Endothelial cell of umbilical vein (primary cell): ENCODE measurements at regions of chr7 and their contacts with region 1.

Region 1: GRCh38 chr7:117375380-117375779 is 51.9 kb downstream of the ASZ1 start:
- DNase-seq: no peak
- H3K4me3 ChIP-seq: no peak overlapping the region
- H3K27ac ChIP-seq: no peak overlapping the region
- H3K4me1 ChIP-seq: no peaks in the 10 kb centered on the region
- H3K27me3 ChIP-seq: no peaks in the 10 kb centered on the region
- CTCF ChIP-seq: peak in 1 of 2 donors; percentile 9
- POLR2A ChIP-seq: no peak

Region 2: DNA sequence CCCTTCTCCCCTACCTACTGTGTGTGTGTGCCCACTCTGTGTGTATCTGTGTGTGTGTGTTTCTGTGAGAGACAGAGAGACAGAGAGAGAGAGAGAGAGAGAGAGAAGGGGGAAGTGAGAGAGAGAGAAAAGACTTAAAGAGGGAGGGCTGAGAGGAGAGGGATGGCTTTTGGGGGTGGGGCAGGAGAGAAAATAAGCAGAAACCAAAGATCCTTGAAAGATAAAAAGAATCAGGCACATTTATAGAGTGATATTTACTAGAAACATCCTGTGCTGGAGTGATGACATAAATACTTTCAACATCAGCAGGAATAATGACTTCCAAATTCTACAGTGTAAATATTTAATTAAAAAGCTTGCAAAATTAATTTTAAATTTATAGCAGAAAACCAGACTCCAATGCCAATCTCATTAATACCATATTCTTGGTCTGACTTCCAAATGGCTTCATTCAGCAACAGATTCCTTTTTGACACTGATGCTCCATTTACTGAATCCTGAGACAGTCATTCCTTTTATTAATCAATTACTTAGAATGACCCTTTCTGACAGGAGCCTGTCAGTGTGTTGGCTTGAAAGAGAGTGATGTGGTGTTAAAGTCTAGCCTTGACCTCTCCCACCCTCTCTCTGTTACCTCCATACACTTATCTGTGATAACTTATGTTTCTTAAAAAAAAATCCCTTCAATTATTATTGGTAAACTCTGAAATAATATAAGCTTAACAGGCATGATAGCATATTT is 10.9 kb before region 1 on chr7:
- CTCF ChIA-PET with region 1: interaction called, 18 read pairs
- POLR2A ChIA-PET with region 1: no interaction called
- dilution Hi-C with region 1: no loop called
- intact Hi-C with region 1: no loop called
- DNase-seq: no peak
- H3K4me3 ChIP-seq: no peak overlapping the region
- H3K27ac ChIP-seq: no peak overlapping the region
- H3K4me1 ChIP-seq: no peaks in the 10 kb centered on the region
- H3K27me3 ChIP-seq: no peaks in the 10 kb centered on the region
- CTCF ChIP-seq: no peak
- POLR2A ChIP-seq: no peak